ENCODE measurements at regions of chr6 and their contacts with region 1.

Region 1: DNA sequence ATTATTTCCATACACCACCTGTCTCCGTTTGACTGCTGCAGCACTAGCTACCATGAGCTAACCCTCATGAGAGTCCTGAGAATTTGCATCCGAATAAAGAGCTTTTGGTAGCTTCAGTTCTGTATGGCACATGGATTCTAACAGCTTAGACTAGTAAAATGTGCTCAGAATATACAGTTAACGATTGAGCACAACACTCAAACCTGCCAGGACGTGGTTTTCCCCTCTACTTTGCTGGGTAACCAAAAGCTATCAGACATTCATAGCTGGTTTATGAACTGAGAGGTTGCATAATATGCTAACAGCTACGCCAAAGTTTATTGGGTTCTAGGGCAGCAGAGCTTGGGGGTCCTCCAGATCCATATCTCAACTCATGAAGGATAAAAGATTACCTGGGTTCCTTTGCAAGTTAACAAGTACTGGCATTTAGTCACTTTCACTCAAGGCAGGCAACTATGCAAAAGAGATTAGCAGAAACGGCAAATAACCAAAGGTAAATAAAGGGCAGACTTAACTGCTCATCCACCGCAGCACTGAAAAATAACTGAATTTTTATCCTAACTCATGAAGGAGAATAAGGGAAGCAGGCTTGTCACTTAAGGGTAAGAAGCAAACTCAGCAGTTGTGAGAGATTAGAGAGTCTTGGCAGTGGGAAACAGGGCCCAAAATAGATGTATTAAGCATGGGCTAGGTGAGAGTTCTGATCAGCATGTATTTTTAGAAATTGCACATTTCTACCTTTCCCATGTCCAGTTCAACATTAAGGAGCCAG is 29.4 kb downstream of the NUDT3 start:
- DNase-seq: peak; percentile 38
- ATAC-seq: peak; percentile 86
- H3K4me3 ChIP-seq: peak overlapping the region; percentile 17; the same call in 1 of the 2 replicates
- H3K27ac ChIP-seq: peak overlapping the region; percentile 45
- H3K4me1 ChIP-seq: peaks cover 8% of the 10 kb centered on the region
- H3K27me3 ChIP-seq: no peaks in the 10 kb centered on the region
- CTCF ChIP-seq: no peak
- EP300 ChIP-seq: no peak
- POLR2A ChIP-seq: no peak
- RAD21 ChIP-seq: no peak

Region 2: DNA sequence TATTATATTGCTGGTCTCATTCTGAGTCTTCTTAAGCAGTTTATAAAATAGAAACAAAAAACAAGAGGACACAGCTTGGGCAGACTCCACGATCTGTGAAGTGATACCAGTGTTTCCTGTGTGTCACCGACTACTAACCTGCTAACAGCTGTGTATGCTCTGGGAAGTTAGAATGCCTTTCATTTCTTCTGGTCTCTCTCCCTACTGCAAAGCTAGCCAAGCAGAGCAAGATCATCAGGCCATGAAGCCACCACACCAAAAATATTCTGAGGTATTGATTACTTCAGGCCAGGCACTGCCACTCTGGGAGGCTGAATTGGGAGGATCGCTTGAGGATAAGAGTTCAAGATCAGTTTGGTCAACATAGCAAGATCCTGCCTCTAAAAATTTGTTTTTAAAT is 67.4 kb before region 1 on chr6:
- CTCF ChIA-PET with region 1: interaction called, 4 read pairs
- POLR2A ChIA-PET with region 1: interaction called, 3 read pairs
- RAD21 ChIA-PET with region 1: interaction called, 5 read pairs
- SMC1A ChIA-PET with region 1: interaction called, 14 read pairs
- in situ Hi-C with region 1: no loop called
- intact Hi-C with region 1: no loop called
- DNase-seq: peak; percentile 95
- ATAC-seq: peak; percentile 95
- H3K4me3 ChIP-seq: 0 out of 2 replicates have a peak overlapping the region, but pooled peaks have one; percentile 4
- H3K27ac ChIP-seq: peak overlapping the region; percentile 76
- H3K4me1 ChIP-seq: peaks cover 40% of the 10 kb centered on the region
- H3K27me3 ChIP-seq: no peaks in the 10 kb centered on the region
- CTCF ChIP-seq: no peak
- EP300 ChIP-seq: no peak
- POLR2A ChIP-seq: no peak
- RAD21 ChIP-seq: no peak

Region 3: GRCh38 chr6:34332251-34333198 is 30.6 kb before region 1 on chr6:
- CTCF ChIA-PET with region 1: interaction called, 3 read pairs
- POLR2A ChIA-PET with region 1: interaction called, 5 read pairs
- RAD21 ChIA-PET with region 1: interaction called, 3 read pairs
- SMC1A ChIA-PET with region 1: interaction called, 22 read pairs
- in situ Hi-C with region 1: no loop called
- intact Hi-C with region 1: no loop called
- DNase-seq: no peak
- ATAC-seq: peak; percentile 81
- H3K4me3 ChIP-seq: no peak overlapping the region
- H3K27ac ChIP-seq: peak overlapping the region; percentile 65
- H3K4me1 ChIP-seq: peaks cover 26% of the 10 kb centered on the region
- H3K27me3 ChIP-seq: no peaks in the 10 kb centered on the region
- CTCF ChIP-seq: no peak
- EP300 ChIP-seq: no peak
- POLR2A ChIP-seq: no peak
- RAD21 ChIP-seq: no peak

Region 4: GRCh38 chr6:34350137-34350933 is 12.8 kb before region 1 on chr6:
- CTCF ChIA-PET with region 1: interaction called, 6 read pairs
- POLR2A ChIA-PET with region 1: interaction called, 7 read pairs
- RAD21 ChIA-PET with region 1: interaction called, 18 read pairs
- SMC1A ChIA-PET with region 1: interaction called, 26 read pairs
- in situ Hi-C with region 1: no loop called
- intact Hi-C with region 1: no loop called
- DNase-seq: no peak
- ATAC-seq: no peak
- H3K4me3 ChIP-seq: no peak overlapping the region
- H3K27ac ChIP-seq: no peak overlapping the region
- H3K4me1 ChIP-seq: peaks cover 15% of the 10 kb centered on the region
- H3K27me3 ChIP-seq: no peaks in the 10 kb centered on the region
- CTCF ChIP-seq: no peak
- EP300 ChIP-seq: no peak
- POLR2A ChIP-seq: no peak
- RAD21 ChIP-seq: no peak

Region 5: GRCh38 chr6:34392497-34393190 is 29.5 kb after region 1 on chr6 and contains the start of gene NUDT3:
- CTCF ChIA-PET with region 1: interaction called, 5 read pairs
- POLR2A ChIA-PET with region 1: interaction called, 14 read pairs
- RAD21 ChIA-PET with region 1: interaction called, 20 read pairs
- SMC1A ChIA-PET with region 1: interaction called, 22 read pairs
- in situ Hi-C with region 1: no loop called
- intact Hi-C with region 1: no loop called
- DNase-seq: peak; percentile 83
- ATAC-seq: peak; percentile 90
- H3K4me3 ChIP-seq: peak within 1 kb of the TSS; percentile 99
- H3K27ac ChIP-seq: peak within 1 kb of the TSS; percentile 75
- H3K4me1 ChIP-seq: peaks cover 3% of the 10 kb centered on the region
- H3K27me3 ChIP-seq: no peaks in the 10 kb centered on the region
- CTCF ChIP-seq: peak; percentile 90 to 93 (median 90)
- EP300 ChIP-seq: no peak
- POLR2A ChIP-seq: peak; percentile 95
- RAD21 ChIP-seq: peak; percentile 64
- polyA plus RNA-seq, gene NUDT3: 2.4 to 23.6 TPM